Activated CD4-positive, alpha-beta memory T cell treated with anti-CD3 and anti-CD28 coated beads for 36 hours (primary cell): ENCODE measurements at regions of chr5 and their contacts with region 1.

Region 1: DNA sequence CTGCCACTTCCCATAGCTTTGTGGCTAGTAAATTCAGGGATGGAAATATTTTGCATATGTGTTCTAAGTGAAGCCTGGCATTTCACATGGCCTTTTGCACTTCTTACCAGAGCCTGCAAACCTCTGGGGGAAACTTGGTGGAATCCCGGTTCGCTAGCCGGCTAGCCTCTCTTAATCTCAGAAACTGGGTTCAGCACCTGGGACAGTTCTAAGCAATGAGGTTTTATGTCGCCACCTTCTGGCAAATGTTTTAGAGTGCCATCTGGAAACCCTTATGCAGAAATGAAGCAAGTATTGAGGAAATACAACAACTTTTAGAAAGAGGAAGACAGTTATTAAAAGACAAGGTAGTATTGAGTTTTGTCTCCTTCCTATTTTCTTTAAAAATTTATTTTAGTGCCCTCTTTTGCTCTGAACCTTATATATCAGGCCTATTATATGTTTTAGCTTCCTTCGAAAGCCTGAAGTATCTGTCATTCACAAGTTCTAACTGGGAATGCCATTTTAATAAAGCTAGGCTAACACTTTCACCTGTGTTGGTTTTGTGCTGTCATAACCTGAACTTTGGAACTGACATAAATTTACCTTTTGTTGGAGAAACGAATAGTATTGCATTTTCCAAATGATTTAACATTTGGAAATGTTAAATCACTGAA is 963 bp upstream of the HTR1A start:
- DNase-seq: peak; percentile 21
- H3K4me3 Mint-ChIP-seq: no peak overlapping the region
- H3K27ac Mint-ChIP-seq: no peak overlapping the region
- H3K4me1 Mint-ChIP-seq: no peaks in the 10 kb centered on the region
- H3K27me3 Mint-ChIP-seq: peaks cover 25% of the 10 kb centered on the region

Region 2: GRCh38 chr5:63401436-63402046 is 561.7 kb before region 1 on chr5:
- CTCF ChIA-PET with region 1: interaction called, 3 read pairs
- POLR2A ChIA-PET with region 1: no interaction called
- intact Hi-C with region 1: loop called (anchors 2 kb)
- DNase-seq: peak; percentile 47
- H3K4me3 Mint-ChIP-seq: no peak overlapping the region
- H3K27ac Mint-ChIP-seq: no peak overlapping the region
- H3K4me1 Mint-ChIP-seq: no peaks in the 10 kb centered on the region
- H3K27me3 Mint-ChIP-seq: no peaks in the 10 kb centered on the region

Region 3: GRCh38 chr5:63916786-63917185 is 46.4 kb before region 1 on chr5:
- CTCF ChIA-PET with region 1: no interaction called
- POLR2A ChIA-PET with region 1: no interaction called
- intact Hi-C with region 1: no loop called
- DNase-seq: no peak
- H3K4me3 Mint-ChIP-seq: no peak overlapping the region
- H3K27ac Mint-ChIP-seq: no peak overlapping the region
- H3K4me1 Mint-ChIP-seq: no peaks in the 10 kb centered on the region
- H3K27me3 Mint-ChIP-seq: no peaks in the 10 kb centered on the region